ENCODE measurements at regions of chr17 and their contacts with region 1.

Region 1: GRCh38 chr17:12395733-12396354 is 269.8 kb upstream of the MYOCD start:
- DNase-seq: peak; percentile 47 to 61
- H3K4me3 ChIP-seq: no peak overlapping the region
- H3K27ac ChIP-seq: no peak overlapping the region
- H3K4me1 ChIP-seq: no peaks in the 10 kb centered on the region
- H3K27me3 ChIP-seq: no peaks in the 10 kb centered on the region
- CTCF ChIP-seq: peak; percentile 15 to 76 (median 54)
- POLR2A ChIP-seq: no peak

Region 2: GRCh38 chr17:12744298-12744697 is 348.5 kb after region 1 on chr17:
- intact Hi-C with region 1: loop called (anchors 10 kb)
- DNase-seq: no peak
- H3K4me3 ChIP-seq: no peak overlapping the region
- H3K27ac ChIP-seq: no peak overlapping the region
- H3K4me1 ChIP-seq: peaks cover 0 to 4% of the 10 kb centered on the region in 2 donors
- H3K27me3 ChIP-seq: no peaks in the 10 kb centered on the region
- CTCF ChIP-seq: no peak
- POLR2A ChIP-seq: no peak

Measured in thyroid gland (tissue), 4 donors.